A549 (cell line): ENCODE measurements at regions of chr1 and their contacts with region 1.

Region 1: GRCh38 chr1:101238681-101239094 is 1.9 kb downstream of the S1PR1 start:
- DNase-seq: peak; percentile 55 to 66
- ATAC-seq: peak; percentile 81 to 87
- H3K4me3 ChIP-seq: no peak overlapping the region
- H3K27ac ChIP-seq: no peak overlapping the region
- H3K4me1 ChIP-seq: peaks cover 12% of the 10 kb centered on the region; the same call in 2 of the 3 replicates
- CTCF ChIP-seq: peak; percentile 61
- EP300 ChIP-seq: no peak
- POLR2A ChIP-seq: no peak
- RAD21 ChIP-seq: peak; percentile 55 to 63

Region 2: GRCh38 chr1:101221945-101222429 is 16.7 kb before region 1 on chr1:
- CTCF ChIA-PET with region 1: interaction called, 12 read pairs
- POLR2A ChIA-PET with region 1: no interaction called
- DNase-seq: no peak
- ATAC-seq: no peak
- H3K4me3 ChIP-seq: no peak overlapping the region
- H3K27ac ChIP-seq: no peak overlapping the region
- H3K4me1 ChIP-seq: no peaks in the 10 kb centered on the region
- CTCF ChIP-seq: no peak
- EP300 ChIP-seq: no peak
- POLR2A ChIP-seq: no peak
- RAD21 ChIP-seq: no peak

Region 3: DNA sequence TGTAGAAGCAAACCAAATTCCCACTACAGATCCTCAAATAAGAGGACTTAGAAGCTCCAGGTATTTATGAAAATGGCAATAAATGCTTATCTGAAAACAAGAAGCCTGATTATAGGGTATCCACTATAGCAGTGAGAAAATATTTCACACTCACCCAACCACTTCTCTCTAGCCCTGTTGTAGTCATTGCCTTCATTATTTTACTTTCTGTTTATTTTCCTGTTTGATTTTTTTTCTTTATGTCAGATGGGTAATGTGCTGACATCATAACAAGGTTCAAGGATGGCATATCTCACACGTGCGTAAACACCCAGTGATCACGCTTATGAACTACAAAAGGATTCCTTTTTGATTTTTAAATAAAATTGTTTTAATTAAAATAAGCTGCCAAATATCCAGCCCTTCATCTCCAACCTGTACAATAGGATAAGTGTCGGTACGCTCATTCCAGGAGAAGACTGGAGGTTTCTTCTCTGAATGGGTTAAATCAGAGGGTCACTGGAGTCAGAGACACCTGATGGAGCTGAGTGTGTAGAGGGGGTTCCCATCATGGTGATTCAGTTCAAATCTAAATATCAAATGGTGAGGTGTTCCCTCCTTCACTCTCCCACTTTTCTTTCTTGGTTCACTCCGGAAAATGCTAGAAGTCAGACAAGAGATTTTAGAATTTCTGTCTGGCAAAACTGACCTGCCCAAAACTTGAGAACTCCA is 10.1 kb before region 1 on chr1:
- CTCF ChIA-PET with region 1: interaction called, 12 read pairs
- POLR2A ChIA-PET with region 1: no interaction called
- DNase-seq: no peak
- ATAC-seq: no peak
- H3K4me3 ChIP-seq: no peak overlapping the region
- H3K27ac ChIP-seq: no peak overlapping the region
- H3K4me1 ChIP-seq: no peaks in the 10 kb centered on the region
- CTCF ChIP-seq: no peak
- EP300 ChIP-seq: no peak
- POLR2A ChIP-seq: no peak
- RAD21 ChIP-seq: no peak